ENCODE measurements at regions of chr18 and their contacts with region 1.

Region 1: GRCh38 chr18:23503038-23503962 is at the start of gene RMC1:
- DNase-seq: peak; percentile 96
- H3K4me3 ChIP-seq: peak within 1 kb of the TSS; percentile 96
- H3K27ac ChIP-seq: peak within 1 kb of the TSS; percentile 72
- H3K4me1 ChIP-seq: peaks cover 40% of the 10 kb centered on the region
- CTCF ChIP-seq: peak; percentile 58
- total RNA-seq, gene RMC1: 28.4 and 32.8 TPM in 2 replicates

Region 2: DNA sequence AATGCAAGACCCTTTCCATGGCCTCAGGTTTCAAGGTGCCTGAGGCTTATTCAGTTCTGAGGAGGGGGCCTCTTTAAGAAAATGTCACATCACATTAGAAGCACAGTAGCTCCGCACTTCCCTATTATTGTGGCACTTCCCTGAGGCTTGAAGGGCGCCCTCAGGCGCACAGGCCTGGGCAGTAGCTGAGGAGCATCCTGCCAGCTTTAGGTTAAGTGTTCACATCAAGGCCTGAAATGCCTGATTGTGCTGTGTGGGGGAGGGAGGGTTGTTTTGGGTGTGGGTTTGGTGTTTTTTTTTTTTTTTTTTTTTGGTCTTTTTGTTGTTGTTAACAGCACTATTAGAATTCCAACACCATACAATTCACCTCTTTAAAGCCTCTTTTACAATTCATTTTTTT is 260.1 kb before region 1 on chr18:
- CTCF ChIA-PET with region 1: no interaction called
- POLR2A ChIA-PET with region 1: no interaction called
- intact Hi-C with region 1: loop called (anchors 5 kb)
- DNase-seq: peak; percentile 85
- H3K4me3 ChIP-seq: no peak overlapping the region
- H3K27ac ChIP-seq: peak overlapping the region; percentile 95
- H3K4me1 ChIP-seq: peaks cover 61% of the 10 kb centered on the region
- CTCF ChIP-seq: peak; percentile 84

Region 3: DNA sequence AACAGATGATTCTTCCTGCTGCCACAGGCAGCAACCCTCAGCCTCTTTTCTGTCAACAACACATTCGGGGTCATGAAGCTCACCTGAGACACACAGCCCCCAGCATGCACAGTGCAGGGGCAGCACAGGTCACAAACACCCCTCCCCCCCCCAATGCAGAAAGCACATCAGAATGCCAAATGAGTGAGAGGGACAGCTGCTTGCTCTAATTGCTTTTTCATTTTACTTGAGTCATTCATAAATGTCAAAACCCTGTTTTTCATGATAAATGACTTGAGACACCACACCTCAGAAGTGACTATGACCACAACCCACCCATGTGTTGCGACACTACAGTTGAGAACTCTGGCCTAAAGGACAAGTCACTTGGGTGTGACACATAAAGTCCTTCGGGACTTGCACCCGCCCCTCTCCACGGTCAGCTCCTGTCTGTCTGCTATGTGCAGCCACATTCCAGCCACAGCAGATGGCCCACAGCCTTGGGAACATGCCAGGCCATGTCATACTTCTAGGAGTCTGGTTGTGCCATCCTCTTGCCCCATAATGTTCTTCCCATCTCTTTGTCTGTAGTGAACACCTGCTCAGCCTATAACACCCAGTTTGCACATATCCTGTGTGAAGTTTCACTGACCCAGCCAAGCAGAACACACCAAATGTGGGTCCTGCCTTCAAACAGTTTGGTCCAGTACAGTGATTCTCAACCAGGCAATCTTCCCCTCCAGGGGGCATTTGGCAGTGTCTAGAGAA is 80.5 kb before region 1 on chr18:
- CTCF ChIA-PET with region 1: no interaction called
- POLR2A ChIA-PET with region 1: no interaction called
- intact Hi-C with region 1: loop called (anchors 2 kb)
- DNase-seq: peak; percentile 87
- H3K4me3 ChIP-seq: peak overlapping the region; percentile 35
- H3K27ac ChIP-seq: peak overlapping the region; percentile 89
- H3K4me1 ChIP-seq: peaks cover 47% of the 10 kb centered on the region
- CTCF ChIP-seq: peak; percentile 50

Region 4: DNA sequence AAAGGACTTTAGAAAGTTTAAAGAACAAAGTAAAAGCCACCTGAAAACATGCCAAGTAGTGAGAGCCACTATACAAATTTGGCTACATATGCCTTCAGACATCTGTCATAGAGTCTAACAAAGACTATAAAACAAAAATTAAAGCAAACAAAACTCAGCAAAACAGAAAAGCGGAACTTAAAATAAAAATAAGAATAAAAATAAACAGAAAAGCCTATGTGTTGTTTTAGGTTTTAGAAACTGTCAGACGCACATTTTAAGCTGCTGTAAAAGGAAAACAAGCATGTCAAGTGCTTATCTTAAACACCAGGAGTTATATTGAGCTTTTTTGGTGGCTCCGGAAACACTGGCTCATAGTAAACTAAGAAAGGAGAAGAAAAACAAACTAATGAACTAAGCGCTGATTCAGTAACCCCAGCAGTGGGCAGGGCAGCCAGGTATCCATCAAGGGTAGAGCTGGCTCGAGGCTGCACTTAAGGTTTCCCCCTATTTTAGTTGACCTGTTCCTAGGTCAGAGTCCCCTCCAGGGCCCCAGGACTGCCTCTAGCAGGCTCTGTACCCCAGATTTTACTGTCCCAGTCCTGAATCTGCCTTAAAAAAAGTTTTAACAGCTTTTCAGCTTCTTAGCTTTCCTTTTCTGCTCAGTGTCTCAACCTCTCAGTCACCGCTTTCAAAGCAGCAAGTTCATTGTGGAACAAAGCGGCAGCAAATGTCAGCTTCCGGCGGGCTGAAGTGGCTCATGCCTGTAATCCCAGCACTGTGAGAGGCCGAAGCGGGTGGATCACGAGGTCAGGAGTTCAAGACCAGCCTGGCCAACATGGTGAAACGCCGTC is 15.3 kb before region 1 on chr18:
- CTCF ChIA-PET with region 1: interaction called, 11 read pairs
- POLR2A ChIA-PET with region 1: interaction called, 10 read pairs
- intact Hi-C with region 1: no loop called
- DNase-seq: peak; percentile 33
- H3K4me3 ChIP-seq: peak overlapping the region; percentile 20
- H3K27ac ChIP-seq: peak overlapping the region; percentile 45
- H3K4me1 ChIP-seq: peaks cover 13% of the 10 kb centered on the region
- CTCF ChIP-seq: no peak

Region 5: DNA sequence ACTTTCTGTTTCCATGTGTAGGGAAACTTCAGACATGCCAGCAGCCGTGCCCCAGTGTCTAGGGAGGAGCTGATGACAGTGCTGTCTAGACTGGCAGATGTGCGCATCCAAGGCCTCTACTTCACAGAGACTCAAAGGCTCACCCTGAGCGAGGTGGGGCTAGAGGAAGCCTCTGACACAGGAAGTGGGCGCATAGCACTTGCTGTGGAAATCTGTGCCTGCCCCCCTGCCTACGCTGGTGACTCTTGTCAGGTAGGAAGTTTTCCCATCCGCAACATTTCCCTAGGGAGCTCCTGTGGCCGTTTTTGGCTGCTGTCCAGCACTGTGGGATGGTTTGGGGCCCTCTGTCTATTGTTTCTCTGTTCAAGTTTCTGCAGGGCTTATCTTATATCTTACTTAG is 368.1 kb after region 1 on chr18:
- CTCF ChIA-PET with region 1: no interaction called
- POLR2A ChIA-PET with region 1: no interaction called
- intact Hi-C with region 1: no loop called
- DNase-seq: peak; percentile 86
- H3K4me3 ChIP-seq: peak overlapping the region; percentile 51
- H3K27ac ChIP-seq: peak overlapping the region; percentile 95
- H3K4me1 ChIP-seq: peaks cover 68% of the 10 kb centered on the region
- CTCF ChIP-seq: no peak